Activated T-helper 2 cell treated with anti-CD3 and anti-CD28 coated beads, Interferon-gamma antibody, Interleukin-2, Interleukin-4, amounts not matched to agents 10 μg/mL and 5 μg/mL and 100 μg/mL, durations not matched to agents 14 hours and 24 hours and 36 hours (primary cell): ENCODE measurements at regions of chr5 and their contacts with region 1.

Region 1: DNA sequence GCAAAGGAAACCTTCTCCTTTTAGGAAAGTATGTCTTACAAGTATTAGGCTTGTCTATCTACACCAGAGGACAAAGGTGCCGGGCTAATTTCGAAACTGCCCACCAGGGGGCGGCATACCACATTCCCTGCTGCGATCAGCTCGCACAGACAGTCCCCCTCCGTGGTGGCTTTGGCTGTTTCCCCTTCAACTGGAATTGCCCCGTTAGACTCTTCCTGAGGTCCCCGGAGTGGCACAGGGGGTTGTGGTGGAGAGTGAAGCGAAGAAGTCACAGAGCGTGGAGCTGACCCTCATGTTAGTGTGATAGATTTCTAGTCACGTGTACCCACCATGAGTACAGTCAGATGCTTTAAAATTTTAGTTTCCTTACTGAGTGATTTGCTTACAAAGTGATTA is 17.5 kb downstream of the PTTG1 start:
- DNase-seq: peak; percentile 81
- H3K4me3 Mint-ChIP-seq: peak overlapping the region; percentile 81
- H3K27ac Mint-ChIP-seq: peak overlapping the region; percentile 99
- H3K4me1 Mint-ChIP-seq: peaks cover 58% of the 10 kb centered on the region
- H3K27me3 Mint-ChIP-seq: no peaks in the 10 kb centered on the region

Region 2: DNA sequence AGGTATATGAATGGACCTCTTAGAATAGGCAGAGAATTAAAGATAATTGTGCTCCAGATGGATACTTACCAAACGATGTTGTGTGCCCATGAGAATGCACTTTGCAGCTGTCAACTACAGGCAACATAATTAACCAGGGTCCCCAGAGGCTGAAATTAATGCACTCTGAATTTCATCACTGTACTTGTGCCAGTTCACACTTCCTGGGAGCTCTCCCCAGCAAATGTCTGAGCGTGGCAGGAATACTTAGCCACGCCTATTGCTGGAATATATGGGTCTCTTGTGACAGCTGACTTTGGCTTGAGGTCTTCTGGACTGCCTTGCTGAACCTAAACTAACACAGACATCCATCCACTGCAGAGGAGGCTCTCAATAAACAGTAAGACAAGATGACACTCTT is 56.9 kb before region 1 on chr5:
- intact Hi-C with region 1: no loop called
- DNase-seq: no peak
- H3K4me3 Mint-ChIP-seq: no peak overlapping the region
- H3K27ac Mint-ChIP-seq: no peak overlapping the region
- H3K4me1 Mint-ChIP-seq: no peaks in the 10 kb centered on the region
- H3K27me3 Mint-ChIP-seq: peaks cover 26% of the 10 kb centered on the region

Region 3: GRCh38 chr5:160450164-160450932 is 11.1 kb after region 1 on chr5:
- intact Hi-C with region 1: no loop called
- DNase-seq: no peak
- H3K4me3 Mint-ChIP-seq: no peak overlapping the region
- H3K27ac Mint-ChIP-seq: no peak overlapping the region
- H3K4me1 Mint-ChIP-seq: peaks cover 40% of the 10 kb centered on the region
- H3K27me3 Mint-ChIP-seq: no peaks in the 10 kb centered on the region

Region 4: GRCh38 chr5:160467555-160468362 is 28.6 kb after region 1 on chr5:
- intact Hi-C with region 1: loop called (anchors 1 kb)
- DNase-seq: peak; percentile 84
- H3K4me3 Mint-ChIP-seq: peak overlapping the region; percentile 96
- H3K27ac Mint-ChIP-seq: peak overlapping the region; percentile 99
- H3K4me1 Mint-ChIP-seq: peaks cover 67% of the 10 kb centered on the region
- H3K27me3 Mint-ChIP-seq: no peaks in the 10 kb centered on the region

Region 5: DNA sequence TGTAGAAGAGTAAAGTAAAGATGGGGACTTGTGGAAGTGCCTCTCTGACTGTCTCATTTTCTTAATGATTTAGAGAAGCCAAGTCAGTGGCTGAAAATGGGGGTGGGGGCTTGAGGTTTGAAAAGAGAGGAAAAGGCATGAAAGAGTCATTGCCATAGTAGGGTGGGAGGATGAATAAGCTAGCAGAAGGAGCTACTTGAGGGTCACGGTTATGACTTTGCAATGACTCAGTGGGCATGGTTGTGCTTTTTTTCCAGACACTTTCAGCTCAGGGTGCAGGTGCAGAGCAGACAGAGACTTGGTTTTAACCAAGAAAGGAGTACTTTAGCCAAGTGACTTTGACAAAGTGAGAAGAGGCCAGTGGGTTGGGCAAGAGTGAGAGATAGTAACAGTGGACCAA is 100.2 kb after region 1 on chr5:
- intact Hi-C with region 1: loop called (anchors 1 kb)
- DNase-seq: no peak
- H3K4me3 Mint-ChIP-seq: no peak overlapping the region
- H3K27ac Mint-ChIP-seq: no peak overlapping the region
- H3K4me1 Mint-ChIP-seq: peaks cover 32% of the 10 kb centered on the region
- H3K27me3 Mint-ChIP-seq: no peaks in the 10 kb centered on the region

Region 6: GRCh38 chr5:160787240-160787639 is 348.0 kb after region 1 on chr5:
- intact Hi-C with region 1: loop called (anchors 2 kb)
- DNase-seq: no peak
- H3K4me3 Mint-ChIP-seq: no peak overlapping the region
- H3K27ac Mint-ChIP-seq: no peak overlapping the region
- H3K4me1 Mint-ChIP-seq: peaks cover 1% of the 10 kb centered on the region
- H3K27me3 Mint-ChIP-seq: peaks cover 4% of the 10 kb centered on the region

Region 7: GRCh38 chr5:161544350-161544765 is 1105.2 kb after region 1 on chr5:
- intact Hi-C with region 1: loop called (anchors 10 kb)
- DNase-seq: no peak
- H3K4me3 Mint-ChIP-seq: no peak overlapping the region
- H3K27ac Mint-ChIP-seq: no peak overlapping the region
- H3K4me1 Mint-ChIP-seq: peaks cover 19% of the 10 kb centered on the region
- H3K27me3 Mint-ChIP-seq: peaks cover 44% of the 10 kb centered on the region